ENCODE measurements at regions of chr11 and their contacts with region 1.

Region 1: GRCh38 chr11:125111343-125112207 is at the start of gene TMEM218:
- DNase-seq: peak; percentile 100
- H3K4me3 ChIP-seq: peak within 1 kb of the TSS; percentile 60 to 74 (median 70)
- H3K27ac ChIP-seq: peak within 1 kb of the TSS; percentile 82 to 86 (median 84)
- H3K4me1 ChIP-seq: peaks cover 0 to 9% (median 9%) of the 10 kb centered on the region in 4 donors
- H3K27me3 ChIP-seq: no peaks in the 10 kb centered on the region
- CTCF ChIP-seq: no peak
- EP300 ChIP-seq: no peak
- POLR2A ChIP-seq: no peak
- total RNA-seq, gene TMEM218: 14.0 to 34.6 (median 26.0) TPM

Region 2: GRCh38 chr11:124536520-124536919 is 575.1 kb before region 1 on chr11:
- intact Hi-C with region 1: no loop called
- DNase-seq: no peak
- H3K4me3 ChIP-seq: no peak overlapping the region
- H3K27ac ChIP-seq: no peak overlapping the region
- H3K4me1 ChIP-seq: no peaks in the 10 kb centered on the region
- H3K27me3 ChIP-seq: no peaks in the 10 kb centered on the region
- CTCF ChIP-seq: no peak
- EP300 ChIP-seq: no peak
- POLR2A ChIP-seq: no peak

Region 3: GRCh38 chr11:124983674-124984511 is 127.7 kb before region 1 on chr11:
- intact Hi-C with region 1: no loop called
- DNase-seq: no peak
- H3K4me3 ChIP-seq: no peak overlapping the region
- H3K27ac ChIP-seq: no peak overlapping the region
- H3K4me1 ChIP-seq: no peaks in the 10 kb centered on the region
- H3K27me3 ChIP-seq: no peaks in the 10 kb centered on the region
- CTCF ChIP-seq: no peak
- EP300 ChIP-seq: no peak
- POLR2A ChIP-seq: no peak

Region 4: GRCh38 chr11:125345421-125346178 is 234.0 kb after region 1 on chr11:
- intact Hi-C with region 1: loop called (anchors 5 kb)
- DNase-seq: peak; percentile 92
- H3K4me3 ChIP-seq: no peak overlapping the region
- H3K27ac ChIP-seq: peak overlapping the region; percentile 59 to 65 (median 60)
- H3K4me1 ChIP-seq: peaks cover 0 to 22% (median 19%) of the 10 kb centered on the region in 4 donors
- H3K27me3 ChIP-seq: no peaks in the 10 kb centered on the region
- CTCF ChIP-seq: peak; percentile 71 to 96 (median 84)
- EP300 ChIP-seq: no peak
- POLR2A ChIP-seq: no peak

Region 5: DNA sequence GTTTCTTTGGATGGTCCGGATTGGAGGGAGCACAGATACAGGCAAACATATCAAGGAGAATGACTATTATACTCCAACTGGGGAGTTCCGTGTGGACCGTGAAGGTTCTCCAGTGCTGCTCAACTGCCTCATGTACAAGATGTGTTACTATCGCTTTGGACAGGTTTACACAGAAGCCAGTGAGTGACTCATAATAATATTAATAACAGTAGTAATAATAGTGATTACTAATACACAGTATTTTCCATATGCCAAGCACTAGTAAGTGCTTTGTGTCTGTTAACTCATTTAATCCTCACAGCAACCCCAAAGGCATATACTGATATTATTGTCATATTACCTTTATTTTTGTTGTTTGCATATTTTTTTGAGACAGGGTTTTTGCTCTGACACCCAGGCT is 506.8 kb after region 1 on chr11:
- intact Hi-C with region 1: no loop called
- DNase-seq: no peak
- H3K4me3 ChIP-seq: no peak overlapping the region
- H3K27ac ChIP-seq: no peak overlapping the region
- H3K4me1 ChIP-seq: peaks cover 0 to 18% (median 2%) of the 10 kb centered on the region in 4 donors
- H3K27me3 ChIP-seq: no peaks in the 10 kb centered on the region
- CTCF ChIP-seq: no peak
- EP300 ChIP-seq: no peak
- POLR2A ChIP-seq: no peak

Measured in sigmoid colon (tissue), 7 donors.